ENCODE measurements at regions of chr3 and their contacts with region 1.

Region 1: GRCh38 chr3:121411523-121411922 is 134.3 kb downstream of the POLQ start:
- DNase-seq: no peak
- ATAC-seq: no peak

Region 2: DNA sequence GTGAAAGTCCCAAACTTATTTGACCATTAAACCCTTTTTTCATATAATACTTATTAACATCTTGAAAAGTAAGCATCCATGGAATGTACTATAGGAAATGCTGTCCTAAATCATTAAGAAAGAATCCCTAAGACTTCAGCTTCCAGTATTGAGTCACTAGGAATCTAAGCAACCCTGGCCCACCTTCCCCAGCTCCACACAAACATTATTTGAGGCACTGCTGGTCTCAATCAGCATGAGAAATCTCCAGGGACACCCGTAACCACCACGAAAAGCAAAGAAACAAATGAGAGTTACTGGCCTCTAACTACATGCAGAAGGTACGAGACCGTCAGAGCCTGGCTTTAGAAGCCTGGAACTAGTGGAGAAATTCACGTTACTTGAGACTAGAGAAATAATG is 66.1 kb after region 1 on chr3:
- intact Hi-C with region 1: loop called (anchors 10 kb)
- DNase-seq: no peak
- ATAC-seq: no peak

Region 3: DNA sequence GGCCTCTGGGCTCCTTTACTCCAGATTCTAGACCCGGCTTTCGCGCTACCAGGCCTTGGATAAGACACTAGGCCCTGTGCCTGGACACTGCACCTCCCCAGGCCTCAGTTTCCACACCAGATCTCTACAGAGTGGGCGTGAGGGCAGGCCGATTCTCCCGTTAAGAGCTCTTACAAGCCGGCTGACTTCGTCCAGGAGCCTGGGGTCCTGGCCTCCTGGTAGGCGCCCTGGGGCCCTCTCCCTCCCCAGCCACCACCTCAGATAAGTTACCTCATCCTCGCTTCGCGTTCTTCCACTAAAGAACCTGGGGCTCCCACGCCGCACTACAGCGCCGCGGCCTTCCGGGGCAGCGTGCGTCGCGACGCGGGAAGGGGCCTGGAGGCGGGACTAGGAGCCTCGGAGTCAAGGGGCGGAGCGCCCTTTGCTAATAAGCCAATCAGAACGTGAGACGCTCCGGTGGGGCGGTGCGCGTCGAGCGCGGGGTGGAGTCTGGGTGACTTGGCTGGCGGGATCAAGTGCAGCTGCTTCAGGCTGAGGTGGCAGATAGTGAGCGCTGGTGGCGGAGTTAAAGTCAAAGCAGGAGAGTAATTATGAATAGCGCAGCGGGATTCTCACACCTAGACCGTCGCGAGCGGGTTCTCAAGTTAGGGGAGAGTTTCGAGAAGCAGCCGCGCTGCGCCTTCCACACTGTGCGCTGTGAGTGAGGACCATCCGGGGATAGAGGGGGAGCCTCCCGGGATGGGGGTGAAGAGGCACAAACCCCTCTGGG is 423.4 kb after region 1 on chr3 and contains the starts of genes EAF2 and IQCB1:
- intact Hi-C with region 1: no loop called
- DNase-seq: peak; percentile 98
- ATAC-seq: peak; percentile 100
- total RNA-seq, gene EAF2: 2.6 TPM
- total RNA-seq, gene IQCB1: 7.5 TPM